ENCODE measurements at regions of chr5 and their contacts with region 1.

Region 1: DNA sequence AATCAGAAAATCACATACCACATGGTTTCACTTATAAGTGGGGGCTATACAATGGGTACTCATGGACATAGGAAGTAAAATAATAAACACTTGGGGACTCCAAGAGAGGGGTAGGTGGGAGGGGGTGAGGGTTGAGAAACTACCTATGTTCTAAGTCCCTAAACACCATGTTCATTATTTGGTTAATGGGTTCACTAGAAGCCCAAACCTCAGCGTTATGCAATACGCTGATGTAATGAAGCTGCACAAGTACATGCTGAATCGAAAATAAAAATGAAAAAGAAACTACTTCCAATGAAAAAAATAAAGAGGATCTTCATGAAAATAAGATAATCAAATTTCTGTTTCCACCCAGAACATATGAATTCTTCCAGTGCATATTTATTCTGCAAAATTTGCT is 208.5 kb downstream of the TMEM161B start:
- DNase-seq: no peak
- ATAC-seq: no peak
- H3K4me3 ChIP-seq: no peak overlapping the region
- H3K27ac ChIP-seq: no peak overlapping the region
- H3K4me1 ChIP-seq: no peaks in the 10 kb centered on the region
- H3K27me3 ChIP-seq: no peaks in the 10 kb centered on the region
- CTCF ChIP-seq: no peak

Region 2: DNA sequence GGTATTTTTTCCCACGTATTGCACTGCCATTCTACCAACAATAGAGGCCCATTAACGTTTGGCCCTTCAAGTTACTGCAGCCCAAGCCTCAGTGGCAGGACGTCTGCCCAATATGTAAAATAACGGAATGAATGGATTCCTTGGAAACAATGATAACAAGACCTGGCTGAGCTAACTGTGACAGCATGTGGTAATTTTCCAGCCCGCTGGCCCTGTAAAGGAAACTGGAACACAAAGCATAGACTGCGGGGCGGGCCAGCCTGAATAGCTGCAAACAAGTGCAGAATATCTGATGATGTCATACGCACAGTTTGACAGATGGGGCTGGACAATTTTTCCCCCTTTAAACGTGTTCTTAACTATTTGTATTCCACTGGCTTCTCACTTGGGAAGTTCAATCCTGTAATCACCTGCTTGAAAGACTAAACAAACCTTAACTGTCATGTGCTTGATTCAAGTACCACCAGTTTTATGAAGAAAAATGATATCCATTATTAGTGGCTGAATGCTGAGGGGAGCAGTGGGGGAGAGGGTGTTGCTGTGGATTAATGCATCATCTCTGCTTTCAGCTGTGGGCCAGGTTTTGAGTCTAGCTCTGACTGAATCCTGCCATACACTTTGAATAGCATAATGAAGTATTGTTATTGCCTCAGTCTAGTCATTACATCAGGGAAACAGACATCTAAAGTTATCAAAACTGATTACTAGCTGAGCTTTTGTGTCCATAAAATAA is 115.5 kb before region 1 on chr5:
- intact Hi-C with region 1: loop called in 1 of 10 experiments (anchors 10 kb)
- DNase-seq: peak; percentile 37 to 52
- ATAC-seq: peak in 7 of 8 donors; percentile 61 to 89 (median 85)
- H3K4me3 ChIP-seq: no peak overlapping the region
- H3K27ac ChIP-seq: no peak overlapping the region
- H3K4me1 ChIP-seq: peaks cover 0 to 13% (median 0%) of the 10 kb centered on the region in 9 donors
- H3K27me3 ChIP-seq: peaks cover 0 to 5% (median 0%) of the 10 kb centered on the region in 7 donors
- CTCF ChIP-seq: no peak